KBM-7 (cell line): ENCODE measurements at regions of chr9 and their contacts with region 1.

Region 1: DNA sequence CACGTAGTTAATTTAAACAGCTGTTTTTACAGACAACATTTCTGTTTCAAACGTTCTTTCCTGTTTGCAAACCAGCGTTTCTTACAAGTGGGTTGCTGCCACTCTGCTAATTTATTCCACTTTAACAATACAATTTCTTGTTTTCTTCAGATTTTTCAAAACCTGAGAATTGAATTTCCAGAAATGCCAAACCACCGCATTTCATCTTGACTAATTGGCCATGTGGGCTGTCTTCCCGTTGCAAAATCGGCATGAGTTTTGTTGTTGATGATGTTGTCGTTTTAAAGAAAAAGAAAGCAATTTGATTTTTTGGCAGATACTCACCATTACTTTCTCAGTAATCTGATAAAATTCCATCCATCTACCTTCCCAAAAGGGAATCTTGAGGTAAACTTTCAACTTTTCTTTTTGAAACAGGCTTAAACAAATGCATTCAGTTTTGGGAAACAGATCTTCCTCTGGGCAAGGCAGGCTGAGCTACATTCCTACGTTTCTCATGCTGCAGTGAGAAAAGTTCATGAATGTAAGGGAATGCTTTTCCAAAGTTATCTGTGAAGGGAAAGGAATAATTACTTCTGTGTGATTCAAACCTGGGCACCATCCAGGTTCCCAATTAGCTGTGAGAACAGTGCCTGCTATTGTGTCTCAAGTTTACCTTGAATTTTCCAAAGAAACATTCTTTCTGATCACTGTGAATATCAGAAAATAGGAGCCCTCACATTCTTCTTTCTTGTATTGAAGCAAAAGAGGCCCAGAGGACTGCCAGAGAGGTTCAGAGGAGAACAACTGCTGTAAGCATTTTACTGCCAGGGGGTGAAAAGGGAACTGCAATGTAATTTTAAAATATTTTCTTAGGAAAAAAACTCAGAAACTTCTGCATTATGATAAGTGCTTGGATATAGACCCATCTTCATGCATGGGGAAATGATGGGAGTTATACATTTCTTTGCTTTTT is 100.7 kb upstream of the TUT7 start:
- DNase-seq: no peak

Region 2: DNA sequence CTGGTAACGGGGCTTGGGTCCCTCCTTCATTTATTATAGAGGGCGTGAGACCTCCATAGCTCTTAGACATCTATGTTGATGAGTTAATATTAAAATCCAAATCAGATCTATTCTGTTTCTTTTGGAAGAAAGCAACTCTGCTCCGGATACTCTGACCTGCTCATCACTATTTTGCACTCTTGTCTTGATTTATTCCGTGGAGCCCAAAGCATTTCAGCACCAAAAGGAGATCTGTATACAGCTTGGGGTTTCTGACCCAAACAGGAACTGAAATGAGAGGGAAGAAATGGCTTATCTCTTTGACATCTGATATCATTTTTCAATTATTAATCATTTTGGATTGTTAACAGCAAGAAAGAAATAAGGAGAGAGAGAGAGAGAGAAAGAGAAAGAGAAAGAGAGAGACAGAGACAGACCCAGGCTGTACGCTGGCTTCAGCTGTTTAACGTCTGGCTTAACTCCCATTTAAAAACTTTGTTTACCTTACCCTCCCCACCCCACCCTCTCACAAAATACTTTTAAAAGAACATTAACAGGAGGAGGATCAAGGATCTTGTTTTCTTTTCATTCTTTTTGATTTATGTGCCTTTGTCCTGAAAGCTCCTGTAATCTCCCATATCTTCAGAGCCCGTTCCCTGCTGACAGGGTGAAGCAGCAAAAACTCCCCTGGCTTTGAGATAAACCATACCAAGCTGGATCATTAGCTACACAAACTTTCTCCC is 130.6 kb after region 1 on chr9:
- in situ Hi-C with region 1: no loop called
- DNase-seq: no peak

Region 3: DNA sequence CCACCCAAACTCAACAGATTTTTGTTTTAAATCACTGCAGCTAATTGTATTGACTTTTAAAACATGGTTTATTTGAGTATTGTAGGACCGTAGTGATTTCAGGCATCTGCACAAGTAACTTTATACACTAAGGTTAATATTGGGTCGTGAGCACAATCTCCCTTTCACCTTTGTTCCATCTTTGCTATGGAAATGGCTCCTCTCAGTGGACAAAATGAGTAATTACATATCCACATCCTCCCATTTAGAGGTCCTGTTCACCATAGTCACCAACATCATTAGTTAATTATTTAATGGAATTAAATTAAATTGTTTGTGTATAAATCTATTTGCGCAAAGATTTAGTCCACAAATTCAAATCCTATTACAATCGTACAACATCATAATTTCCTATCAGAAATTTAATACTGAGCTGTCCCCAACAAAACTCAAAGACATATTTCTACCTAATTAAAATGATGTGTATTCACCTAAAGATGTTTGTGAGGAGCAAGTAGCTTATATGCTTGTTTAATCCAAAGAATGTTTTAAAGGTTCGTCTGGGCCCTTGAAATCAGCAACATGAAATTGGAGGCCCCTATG is 869.8 kb after region 1 on chr9:
- in situ Hi-C with region 1: loop called (anchors 25 kb)
- DNase-seq: peak; percentile 54